T-cell (primary cell): ENCODE measurements at regions of chr2 and their contacts with region 1.

Region 1: DNA sequence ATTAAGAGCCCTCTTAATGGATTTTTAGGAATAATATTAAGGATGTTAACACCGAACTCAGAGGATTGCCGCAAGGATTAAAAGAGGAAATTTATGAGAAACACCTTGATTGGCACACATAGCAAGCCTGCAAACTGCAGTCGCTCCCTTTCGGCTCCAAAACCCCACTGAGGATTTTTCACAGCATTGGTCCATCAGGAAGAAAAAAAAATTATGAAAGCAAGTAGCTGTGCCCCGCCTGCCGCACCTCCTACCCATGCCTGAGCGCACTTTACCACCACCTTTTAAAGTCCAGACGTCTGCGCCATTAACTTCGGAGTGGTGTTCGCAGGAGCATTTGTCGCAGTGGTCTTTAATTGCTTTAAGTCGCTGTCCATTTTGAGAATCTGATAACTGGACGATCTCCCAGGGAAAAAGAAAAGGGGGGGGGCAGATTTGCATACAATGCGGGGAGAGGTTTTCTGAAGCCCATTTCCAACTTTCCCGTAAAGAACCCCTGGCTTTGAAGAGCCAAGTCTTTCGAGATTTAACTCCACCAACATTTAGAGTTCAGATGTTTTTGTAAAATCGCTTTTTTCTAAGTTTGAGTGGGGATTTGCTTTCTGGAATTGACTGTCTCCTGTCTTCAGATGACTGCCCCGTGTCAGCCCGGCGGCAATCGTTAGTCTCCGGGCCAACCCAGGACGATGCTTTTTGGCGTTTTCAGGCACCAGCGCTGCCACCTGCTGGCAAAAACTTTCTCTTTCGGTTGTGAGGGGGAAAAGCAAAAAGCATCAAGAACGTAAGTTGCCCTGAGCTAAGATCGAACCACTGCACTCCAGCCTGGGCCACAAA is 914 bp upstream of the TRABD2A start:
- DNase-seq: peak; percentile 69 to 92 (median 84)
- ATAC-seq: peak; percentile 69 to 76 (median 70)
- H3K4me3 ChIP-seq: peak overlapping the region; percentile 71 to 99
- H3K4me3 Mint-ChIP-seq: peak overlapping the region; percentile 94 to 99 (median 97)
- H3K27ac ChIP-seq: peak overlapping the region; percentile 75
- H3K27ac Mint-ChIP-seq: peak overlapping the region; percentile 95 to 96
- H3K4me1 ChIP-seq: peaks cover 14 to 34% of the 10 kb centered on the region in 2 experiments
- H3K4me1 Mint-ChIP-seq: peaks cover 54 to 63% (median 57%) of the 10 kb centered on the region in 3 donors
- H3K27me3 ChIP-seq: peaks cover 0 to 5% of the 10 kb centered on the region in 2 experiments
- H3K27me3 Mint-ChIP-seq: no peaks in the 10 kb centered on the region

Region 2: DNA sequence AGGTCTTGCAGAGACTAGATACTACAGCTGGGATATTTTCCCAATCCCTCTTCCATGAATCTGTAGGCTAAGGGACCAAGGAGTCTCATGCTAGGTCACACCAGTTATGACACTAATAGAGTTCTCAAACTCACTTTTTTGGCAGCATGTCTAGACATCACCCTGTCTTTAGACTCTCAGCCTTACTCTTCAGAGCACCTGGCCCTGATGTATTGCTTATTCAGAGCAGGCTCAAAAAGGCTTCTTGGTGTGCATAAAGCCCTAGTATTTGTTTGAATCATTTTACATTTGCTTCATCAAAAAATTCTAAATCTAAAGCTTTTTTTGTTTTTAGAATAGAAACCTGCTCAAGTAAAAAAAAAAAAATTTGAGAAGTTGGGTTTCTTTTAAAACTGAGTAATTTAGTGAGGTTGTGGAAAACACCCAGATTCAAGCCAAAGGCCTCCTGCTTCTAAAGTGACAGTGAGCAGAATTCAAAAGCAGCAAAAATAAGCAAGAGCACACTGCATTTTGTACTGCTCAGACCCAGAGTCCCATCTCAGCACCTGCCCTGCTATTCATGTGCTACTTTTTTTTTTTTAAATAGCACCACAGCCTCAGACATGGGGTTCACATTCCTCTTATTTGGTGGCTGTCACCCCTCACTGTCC is 383.5 kb before region 1 on chr2:
- CTCF ChIA-PET with region 1: interaction called in 1 of 2 experiments, 14 read pairs
- POLR2A ChIA-PET with region 1: no interaction called
- DNase-seq: no peak
- ATAC-seq: no peak
- H3K4me3 ChIP-seq: no peak overlapping the region
- H3K4me3 Mint-ChIP-seq: no peak overlapping the region
- H3K27ac ChIP-seq: no peak overlapping the region
- H3K27ac Mint-ChIP-seq: peak overlapping the region; percentile 7 to 51
- H3K4me1 ChIP-seq: peaks cover 4 to 10% of the 10 kb centered on the region in 2 experiments
- H3K4me1 Mint-ChIP-seq: peaks cover 15 to 18% (median 18%) of the 10 kb centered on the region in 3 donors
- H3K27me3 ChIP-seq: no peaks in the 10 kb centered on the region
- H3K27me3 Mint-ChIP-seq: no peaks in the 10 kb centered on the region

Region 3: GRCh38 chr2:84897773-84898172 is 16.0 kb after region 1 on chr2:
- CTCF ChIA-PET with region 1: interaction called in 1 of 2 experiments, 13 read pairs
- POLR2A ChIA-PET with region 1: no interaction called
- DNase-seq: no peak
- ATAC-seq: no peak
- H3K4me3 ChIP-seq: no peak overlapping the region
- H3K4me3 Mint-ChIP-seq: no peak overlapping the region
- H3K27ac ChIP-seq: peak overlapping the region; percentile 75
- H3K27ac Mint-ChIP-seq: peak overlapping the region; percentile 97 to 99
- H3K4me1 ChIP-seq: peaks cover 30 to 44% of the 10 kb centered on the region in 2 experiments
- H3K4me1 Mint-ChIP-seq: peaks cover 53 to 77% (median 71%) of the 10 kb centered on the region in 3 donors
- H3K27me3 ChIP-seq: no peaks in the 10 kb centered on the region
- H3K27me3 Mint-ChIP-seq: no peaks in the 10 kb centered on the region